Dorsolateral prefrontal cortex (tissue), 120 donors: ENCODE measurements at regions of chr2 and their contacts with region 1.

Region 1: GRCh38 chr2:55010149-55010591 is 40.1 kb downstream of the RTN4 start:
- DNase-seq: peak in 9 of 10 donors; percentile 50 to 76 (median 62)
- H3K4me3 ChIP-seq: peak overlapping the region; percentile 33 to 73 (median 59)
- H3K27ac ChIP-seq: peak overlapping the region; percentile 5 to 90 (median 78)
- H3K27me3 ChIP-seq: no peaks in the 10 kb centered on the region
- CTCF ChIP-seq: peak in 7 of 56 donors; percentile 6 to 40 (median 12)

Region 2: GRCh38 chr2:54945391-54946219 is 64.6 kb before region 1 on chr2:
- intact Hi-C with region 1: loop called in 1 of 2 experiments (anchors 10 kb)
- DNase-seq: peak in 5 of 10 donors; percentile 32 to 78 (median 63)
- H3K4me3 ChIP-seq: peak overlapping the region in 6 of 59 donors; percentile 5 to 60 (median 24)
- H3K27ac ChIP-seq: peak overlapping the region; percentile 20 to 93 (median 83)
- H3K27me3 ChIP-seq: no peaks in the 10 kb centered on the region
- CTCF ChIP-seq: no peak